Activated T-helper 1 cell treated with anti-CD3 and anti-CD28 coated beads, Interleukin-12 subunit alpha, Interleukin-12 subunit beta, Interleukin-2, Interleukin-4 antibody, amounts not matched to agents 30 ng/mL and 10 ng/mL and 1 ng/mL, durations not matched to agents 14 hours and 24 hours and 36 hours (primary cell): ENCODE measurements at regions of chr17 and their contacts with region 1.

Region 1: DNA sequence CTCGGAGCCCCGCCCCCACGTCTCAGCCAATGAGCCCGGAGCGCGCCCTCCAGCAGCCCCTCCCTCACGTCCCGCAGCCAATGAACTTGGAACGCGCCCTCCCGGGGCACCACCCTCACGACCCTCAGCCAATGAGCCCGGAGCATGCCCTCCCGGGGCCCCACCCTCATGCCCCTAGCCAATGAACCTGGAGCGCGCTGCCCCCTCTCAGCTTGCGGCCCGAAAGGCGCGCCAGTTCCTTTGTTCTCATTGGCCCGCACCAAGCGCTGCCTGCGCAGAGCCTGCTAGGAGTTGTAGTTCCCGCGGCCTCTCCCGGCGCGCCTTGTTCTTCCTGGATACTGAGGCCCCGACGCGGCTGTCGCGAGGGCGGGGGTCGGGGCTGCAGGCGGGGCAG is at the start of gene LRRC45:
- DNase-seq: peak; percentile 100
- H3K4me3 Mint-ChIP-seq: peak within 1 kb of the TSS; percentile 90
- H3K27ac Mint-ChIP-seq: peak within 1 kb of the TSS; percentile 68
- H3K4me1 Mint-ChIP-seq: peaks cover 15% of the 10 kb centered on the region
- H3K27me3 Mint-ChIP-seq: no peaks in the 10 kb centered on the region
- total RNA-seq, gene LRRC45: 37.6 and 37.8 TPM in 2 replicates

Region 2: GRCh38 chr17:81804559-81805399 is 218.2 kb before region 1 on chr17:
- intact Hi-C with region 1: no loop called
- DNase-seq: no peak
- H3K4me3 Mint-ChIP-seq: no peak overlapping the region
- H3K27ac Mint-ChIP-seq: no peak overlapping the region
- H3K4me1 Mint-ChIP-seq: no peaks in the 10 kb centered on the region
- H3K27me3 Mint-ChIP-seq: peaks cover 45% of the 10 kb centered on the region

Region 3: GRCh38 chr17:81927653-81928543 is 95.1 kb before region 1 on chr17 and contains the start of gene MAFG:
- intact Hi-C with region 1: loop called (anchors 2 kb)
- DNase-seq: peak; percentile 88
- H3K4me3 Mint-ChIP-seq: peak within 1 kb of the TSS; percentile 89
- H3K27ac Mint-ChIP-seq: peak within 1 kb of the TSS; percentile 79
- H3K4me1 Mint-ChIP-seq: peaks cover 15% of the 10 kb centered on the region
- H3K27me3 Mint-ChIP-seq: peaks cover 2% of the 10 kb centered on the region
- total RNA-seq, gene MAFG: 33.8 and 35.5 TPM in 2 replicates

Region 4: DNA sequence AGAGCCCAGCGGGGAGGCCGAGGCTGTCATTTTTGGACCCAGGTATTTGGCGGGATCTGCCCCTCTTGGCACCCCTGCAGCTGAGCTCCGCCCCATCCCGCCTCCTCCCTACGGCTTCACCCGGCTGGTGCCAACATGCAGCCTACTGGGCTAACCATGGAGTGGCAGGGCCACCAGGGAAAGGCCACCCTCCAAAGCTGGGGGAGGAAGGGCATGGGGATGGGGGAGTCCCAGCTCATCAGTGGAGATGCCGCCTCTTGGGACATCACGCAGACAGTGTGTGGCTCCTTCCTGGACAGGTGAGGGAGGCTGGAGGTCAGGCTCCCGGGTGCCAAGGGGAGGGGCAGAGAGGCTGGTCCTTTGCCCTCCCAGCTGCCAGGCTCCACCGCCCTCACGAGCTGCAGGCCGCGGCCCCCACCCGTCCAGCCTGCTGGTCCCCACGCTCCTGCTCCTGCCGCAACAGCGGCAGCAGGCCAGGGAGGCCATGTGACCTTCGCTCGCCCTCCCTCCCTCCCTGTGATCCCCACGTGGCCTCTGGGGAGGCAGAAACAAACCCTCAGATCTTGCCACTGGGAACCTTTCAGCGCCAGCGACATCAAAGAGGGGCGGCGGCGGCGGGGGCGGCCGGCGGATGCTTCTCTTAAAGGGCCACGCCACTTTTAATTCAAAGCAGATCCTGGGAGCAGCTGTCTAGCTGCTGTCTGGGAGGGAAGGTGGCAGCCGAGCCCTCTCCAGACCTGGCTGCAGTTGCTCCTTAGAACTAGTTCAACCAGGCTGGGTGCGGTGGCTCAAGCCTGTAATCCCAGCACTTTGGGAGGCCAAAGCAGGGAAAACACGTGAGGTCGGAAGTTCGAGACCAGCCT is 55.2 kb before region 1 on chr17:
- intact Hi-C with region 1: loop called (anchors 1 kb)
- DNase-seq: peak; percentile 82
- H3K4me3 Mint-ChIP-seq: peak overlapping the region; percentile 74
- H3K27ac Mint-ChIP-seq: peak overlapping the region; percentile 73
- H3K4me1 Mint-ChIP-seq: peaks cover 5% of the 10 kb centered on the region
- H3K27me3 Mint-ChIP-seq: peaks cover 27% of the 10 kb centered on the region

Region 5: DNA sequence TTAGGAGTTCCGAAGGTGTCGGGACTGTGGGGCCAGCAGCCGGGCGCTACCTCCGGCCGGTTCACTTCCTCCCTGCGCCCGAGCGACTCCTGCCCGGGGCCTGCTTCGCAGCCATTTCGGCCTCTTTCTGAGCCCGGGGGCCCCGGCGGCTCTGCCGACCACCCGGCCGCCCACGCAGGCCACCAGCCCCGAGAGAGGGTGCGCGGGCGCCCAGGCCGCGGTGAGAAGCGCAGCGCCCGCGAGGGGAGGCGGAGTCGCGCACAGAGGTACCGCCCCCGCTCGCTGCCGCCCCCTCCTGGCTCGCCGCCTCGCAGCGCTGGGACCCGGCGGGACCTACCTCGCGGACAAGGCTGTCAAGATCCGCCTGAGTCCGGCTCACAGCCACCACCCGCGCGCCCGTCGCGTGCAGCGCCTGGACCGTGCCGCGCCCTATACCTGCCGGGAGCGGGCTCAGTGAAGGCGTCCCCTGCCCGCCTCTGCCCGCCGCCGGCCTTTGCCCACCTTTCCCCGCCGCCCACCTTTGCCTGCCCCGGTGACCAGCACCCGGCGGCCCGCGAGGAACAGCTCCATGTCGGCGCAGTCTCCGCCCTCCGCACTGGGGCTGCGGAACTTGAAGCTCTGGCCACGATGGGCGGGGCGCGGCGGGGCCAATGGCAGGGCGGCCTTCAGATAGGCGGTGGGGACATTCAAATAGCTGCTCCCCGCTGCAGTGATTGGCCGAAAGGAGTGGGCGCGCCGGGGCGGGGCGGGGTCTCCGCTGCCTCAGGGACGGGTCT is 14.3 kb after region 1 on chr17 and contains the start of gene DCXR:
- intact Hi-C with region 1: loop called (anchors 1 kb)
- DNase-seq: peak; percentile 98
- H3K4me3 Mint-ChIP-seq: peak within 1 kb of the TSS; percentile 85
- H3K27ac Mint-ChIP-seq: peak within 1 kb of the TSS; percentile 93
- H3K4me1 Mint-ChIP-seq: peaks cover 24% of the 10 kb centered on the region
- H3K27me3 Mint-ChIP-seq: peaks cover 2% of the 10 kb centered on the region
- total RNA-seq, gene DCXR: 123 and 125 TPM in 2 replicates

Region 6: DNA sequence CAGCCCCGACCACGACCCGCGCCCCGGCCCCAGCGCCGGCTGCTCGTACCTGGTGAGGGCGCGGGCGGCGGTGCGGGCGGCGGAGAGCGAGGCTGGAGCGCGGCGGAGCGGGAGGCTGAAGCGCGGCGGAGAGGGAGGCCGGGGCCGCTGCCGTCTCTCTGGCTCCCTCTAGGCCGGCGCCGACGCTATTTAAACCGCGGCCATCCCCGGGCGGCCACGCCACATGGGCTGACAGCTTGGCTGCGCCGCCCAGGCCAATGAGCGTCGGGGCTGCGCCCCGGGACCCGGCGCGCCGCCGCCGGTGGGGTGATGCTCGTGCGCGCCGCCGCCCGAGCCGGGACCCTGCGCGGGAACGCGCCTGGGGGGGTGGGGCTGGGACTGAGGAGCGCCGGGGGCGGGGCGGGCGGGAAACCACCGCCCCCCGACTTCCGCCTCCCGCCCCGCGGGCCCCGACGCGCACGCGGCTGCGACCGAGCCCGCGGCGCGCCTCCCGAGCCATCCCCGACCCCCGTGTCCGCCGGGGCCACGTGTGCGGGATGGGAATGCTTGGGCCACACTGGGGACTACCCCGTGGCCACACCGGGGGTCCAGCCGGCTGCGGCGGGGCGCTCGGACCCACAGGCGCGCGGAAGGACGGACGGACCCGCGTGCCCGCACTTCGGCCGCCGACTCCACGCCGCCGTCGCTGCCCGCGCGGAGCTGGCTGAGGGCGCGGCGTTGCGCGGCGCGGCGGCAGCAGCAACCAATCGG is 75.3 kb after region 1 on chr17 and contains the start of gene FASN:
- intact Hi-C with region 1: loop called (anchors 1 kb)
- DNase-seq: peak; percentile 90
- H3K4me3 Mint-ChIP-seq: peak within 1 kb of the TSS; percentile 82
- H3K27ac Mint-ChIP-seq: peak within 1 kb of the TSS; percentile 72
- H3K4me1 Mint-ChIP-seq: no peaks in the 10 kb centered on the region
- H3K27me3 Mint-ChIP-seq: no peaks in the 10 kb centered on the region
- total RNA-seq, gene FASN: 415 and 421 TPM in 2 replicates

Region 7: DNA sequence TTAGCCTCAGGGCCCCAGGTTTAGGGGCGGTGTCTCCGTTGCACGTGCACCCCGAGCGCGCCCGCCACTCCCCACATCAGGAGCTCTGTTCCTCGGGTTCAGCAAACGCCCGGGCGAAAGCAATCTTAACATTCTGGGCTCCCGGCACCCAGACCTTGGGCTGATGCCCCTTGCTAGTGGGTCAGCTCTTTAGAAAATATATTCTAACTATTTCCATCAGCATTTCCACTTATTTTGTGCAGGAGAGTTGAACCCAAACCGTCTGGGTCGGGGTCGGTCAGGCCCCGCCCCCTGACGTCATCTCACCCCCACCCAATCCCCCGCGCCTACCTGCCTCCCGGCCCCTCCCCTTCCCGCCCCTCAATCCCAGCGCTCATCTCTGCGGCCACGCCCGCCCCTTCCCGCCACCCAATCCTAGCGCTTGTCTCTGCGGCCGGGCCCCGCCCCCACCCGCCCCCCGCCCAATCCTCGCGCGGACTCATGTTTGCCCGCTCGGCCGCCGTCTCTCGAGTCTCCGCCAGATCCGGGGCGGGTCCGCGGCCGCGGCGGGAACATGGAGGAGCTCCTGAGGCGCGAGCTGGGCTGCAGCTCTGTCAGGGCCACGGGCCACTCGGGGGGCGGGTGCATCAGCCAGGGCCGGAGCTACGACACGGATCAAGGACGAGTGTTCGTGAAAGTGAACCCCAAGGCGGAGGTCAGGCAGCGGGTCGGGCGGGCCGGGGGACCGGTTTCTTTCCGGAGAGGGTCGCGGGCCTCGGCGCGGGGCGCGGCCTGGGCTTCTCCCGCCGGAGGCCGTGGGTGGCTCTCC is 693.4 kb after region 1 on chr17 and contains the start of gene FN3KRP:
- intact Hi-C with region 1: loop called (anchors 2 kb)
- DNase-seq: peak; percentile 85
- H3K4me3 Mint-ChIP-seq: peak within 1 kb of the TSS; percentile 93
- H3K27ac Mint-ChIP-seq: peak within 1 kb of the TSS; percentile 86
- H3K4me1 Mint-ChIP-seq: peaks cover 18% of the 10 kb centered on the region
- H3K27me3 Mint-ChIP-seq: no peaks in the 10 kb centered on the region
- total RNA-seq, gene FN3KRP: 37.6 and 43.7 TPM in 2 replicates